ENCODE measurements at regions of chr11 and their contacts with region 1.

Region 1: GRCh38 chr11:117443266-117444195 is 115.9 kb downstream of the CEP164 start:
- DNase-seq: no peak
- ATAC-seq: peak; percentile 91
- H3K4me3 ChIP-seq: no peak overlapping the region
- H3K27ac ChIP-seq: no peak overlapping the region
- H3K4me1 ChIP-seq: no peaks in the 10 kb centered on the region
- H3K27me3 ChIP-seq: peaks cover 11% of the 10 kb centered on the region
- CTCF ChIP-seq: peak; percentile 83

Region 2: GRCh38 chr11:117221775-117222517 is 221.6 kb before region 1 on chr11:
- CTCF ChIA-PET with region 1: no interaction called
- POLR2A ChIA-PET with region 1: no interaction called
- in situ Hi-C with region 1: no loop called
- intact Hi-C with region 1: no loop called
- DNase-seq: no peak
- ATAC-seq: no peak
- H3K4me3 ChIP-seq: no peak overlapping the region
- H3K27ac ChIP-seq: no peak overlapping the region
- H3K4me1 ChIP-seq: no peaks in the 10 kb centered on the region
- H3K27me3 ChIP-seq: no peaks in the 10 kb centered on the region
- CTCF ChIP-seq: no peak

Region 3: GRCh38 chr11:117334896-117335295 is 108.6 kb before region 1 on chr11:
- CTCF ChIA-PET with region 1: no interaction called
- POLR2A ChIA-PET with region 1: no interaction called
- in situ Hi-C with region 1: loop called (anchors 5 kb)
- intact Hi-C with region 1: no loop called
- DNase-seq: no peak
- ATAC-seq: no peak
- H3K4me3 ChIP-seq: no peak overlapping the region
- H3K27ac ChIP-seq: no peak overlapping the region
- H3K4me1 ChIP-seq: no peaks in the 10 kb centered on the region
- H3K27me3 ChIP-seq: no peaks in the 10 kb centered on the region
- CTCF ChIP-seq: no peak

Region 4: GRCh38 chr11:117807482-117808327 is 364.2 kb after region 1 on chr11:
- CTCF ChIA-PET with region 1: interaction called, 4 read pairs
- POLR2A ChIA-PET with region 1: no interaction called
- in situ Hi-C with region 1: loop called (anchors 25 kb)
- intact Hi-C with region 1: loop called (anchors 5 kb)
- DNase-seq: no peak
- ATAC-seq: peak; percentile 68
- H3K4me3 ChIP-seq: no peak overlapping the region
- H3K27ac ChIP-seq: no peak overlapping the region
- H3K4me1 ChIP-seq: no peaks in the 10 kb centered on the region; the same call in 1 of the 2 replicates
- H3K27me3 ChIP-seq: peaks cover 6% of the 10 kb centered on the region; the same call in 1 of the 2 replicates
- CTCF ChIP-seq: peak; percentile 96